Colonic mucosa (tissue), 4 donors: ENCODE measurements at regions of chr11 and their contacts with region 1.

Region 1: GRCh38 chr11:22130462-22131053 is 62.3 kb upstream of the ANO5 start:
- DNase-seq: no peak
- H3K4me3 ChIP-seq: no peak overlapping the region
- H3K27ac ChIP-seq: no peak overlapping the region
- H3K4me1 ChIP-seq: no peaks in the 10 kb centered on the region
- H3K27me3 ChIP-seq: no peaks in the 10 kb centered on the region
- CTCF ChIP-seq: no peak

Region 2: DNA sequence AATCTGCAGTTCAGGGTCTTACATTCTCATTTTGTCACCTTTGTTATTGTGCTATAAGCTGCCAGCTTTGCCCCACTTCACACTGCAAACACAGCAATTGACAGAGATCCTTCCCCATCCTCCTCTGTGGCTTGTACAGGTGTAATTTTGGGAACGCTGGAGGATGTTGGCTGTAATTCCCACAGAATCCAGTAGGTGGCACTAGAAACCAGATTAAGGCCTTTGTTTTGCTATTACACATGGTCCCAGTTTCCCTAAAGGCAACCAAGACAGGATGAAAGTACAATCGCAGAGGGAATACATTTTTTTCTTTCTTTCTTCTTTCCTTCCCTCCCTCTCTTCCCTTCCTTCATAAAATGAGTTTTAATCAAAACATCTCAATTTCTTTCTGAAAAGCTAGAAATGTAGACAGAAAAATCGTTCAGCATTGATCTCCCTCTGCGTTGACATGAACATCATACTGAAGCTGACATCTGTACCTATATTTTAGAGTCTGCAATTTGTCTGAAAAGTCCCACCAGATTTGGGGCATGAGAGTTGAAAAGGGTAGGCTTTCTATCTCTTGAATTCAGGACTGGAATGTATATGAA is 1482.5 kb before region 1 on chr11:
- intact Hi-C with region 1: loop called (anchors 10 kb)
- DNase-seq: peak; percentile 56
- H3K4me3 ChIP-seq: no peak overlapping the region
- H3K27ac ChIP-seq: no peak overlapping the region
- H3K4me1 ChIP-seq: no peaks in the 10 kb centered on the region
- H3K27me3 ChIP-seq: no peaks in the 10 kb centered on the region
- CTCF ChIP-seq: peak; percentile 89